ENCODE measurements at regions of chr19 and their contacts with region 1.

Region 1: DNA sequence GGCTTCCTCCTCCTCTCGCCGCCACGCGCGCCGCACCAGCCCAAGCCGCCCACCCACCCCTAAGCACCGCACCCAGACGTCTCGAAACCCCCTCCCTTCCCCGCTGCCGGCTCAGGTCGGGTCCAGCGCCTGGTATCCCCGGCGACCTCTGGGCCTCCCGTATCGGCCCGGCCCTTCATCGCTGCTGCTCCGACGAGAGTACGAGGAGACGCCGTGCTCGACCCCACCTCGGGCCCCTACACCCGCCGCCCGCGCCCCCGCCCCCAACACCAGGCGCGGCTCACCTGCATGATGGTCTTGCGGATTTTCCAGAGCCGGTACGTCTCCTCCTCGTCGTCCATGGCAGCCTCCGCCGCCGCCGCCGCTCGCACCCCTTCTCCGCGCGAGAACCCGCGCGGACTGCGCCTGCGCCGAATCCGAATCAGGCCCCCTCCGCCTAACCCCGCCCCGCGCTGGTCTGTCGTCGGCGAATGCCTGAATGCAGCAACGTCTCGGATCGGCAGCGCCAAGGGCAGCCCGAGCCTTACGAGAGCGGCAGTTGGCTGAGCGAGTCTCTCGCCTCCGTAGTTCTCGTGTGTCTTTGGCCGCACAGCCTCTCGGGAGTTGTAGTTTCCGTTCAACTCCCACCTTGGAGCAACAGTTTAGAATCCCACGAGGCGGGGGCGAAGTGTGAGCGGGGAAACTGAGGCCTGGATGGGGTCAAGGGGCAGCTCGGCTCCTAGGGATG is at the start of gene POLR2E:
- DNase-seq: peak; percentile 98
- H3K4me3 Mint-ChIP-seq: peak within 1 kb of the TSS; percentile 90
- H3K27ac Mint-ChIP-seq: peak within 1 kb of the TSS; percentile 96
- H3K4me1 Mint-ChIP-seq: peaks cover 24% of the 10 kb centered on the region
- H3K27me3 Mint-ChIP-seq: no peaks in the 10 kb centered on the region
- CTCF ChIP-seq: no peak
- total RNA-seq, gene POLR2E: 184 and 201 TPM in 2 replicates

Region 2: DNA sequence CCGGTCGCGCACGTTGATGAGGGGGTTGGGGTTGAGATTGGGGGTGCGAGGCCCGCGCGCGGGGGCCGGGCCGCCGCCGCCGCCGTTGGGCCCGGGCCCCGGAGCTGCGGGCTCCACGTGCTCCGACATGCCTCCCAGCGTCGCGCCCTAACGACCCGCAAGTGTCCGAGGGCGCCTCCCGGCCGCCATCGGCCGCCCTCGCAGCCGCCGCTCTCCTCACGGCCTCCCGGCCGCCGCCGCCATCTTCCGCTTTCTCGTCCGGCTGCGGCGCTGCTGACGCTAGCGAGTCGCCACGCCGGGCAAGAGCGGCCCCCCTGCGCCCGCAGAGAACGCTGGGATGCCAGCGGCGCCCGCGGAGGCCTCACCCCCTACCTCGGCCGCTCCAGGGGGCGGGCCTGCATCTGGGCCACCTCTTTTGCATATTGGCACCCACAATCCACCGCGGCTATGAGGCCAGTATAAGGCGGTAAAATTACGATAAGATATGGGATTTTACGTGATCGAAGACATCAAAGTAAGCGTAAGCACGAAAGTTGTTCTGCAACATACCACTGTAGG is 74.2 kb before region 1 on chr19 and contains the start of gene TMEM259:
- CTCF ChIA-PET with region 1: no interaction called
- POLR2A ChIA-PET with region 1: interaction called, 5 read pairs
- intact Hi-C with region 1: loop called (anchors 2 kb)
- DNase-seq: peak; percentile 99
- H3K4me3 Mint-ChIP-seq: peak within 1 kb of the TSS; percentile 86
- H3K27ac Mint-ChIP-seq: peak within 1 kb of the TSS; percentile 99
- H3K4me1 Mint-ChIP-seq: peaks cover 17% of the 10 kb centered on the region
- H3K27me3 Mint-ChIP-seq: no peaks in the 10 kb centered on the region
- CTCF ChIP-seq: no peak
- total RNA-seq, gene TMEM259: 130 and 146 TPM in 2 replicates

Region 3: GRCh38 chr19:1074544-1075283 is 20.4 kb before region 1 on chr19:
- CTCF ChIA-PET with region 1: interaction called, 4 read pairs
- POLR2A ChIA-PET with region 1: interaction called, 11 read pairs
- intact Hi-C with region 1: loop called (anchors 5 kb)
- DNase-seq: peak; percentile 87
- H3K4me3 Mint-ChIP-seq: no peak overlapping the region
- H3K27ac Mint-ChIP-seq: no peak overlapping the region
- H3K4me1 Mint-ChIP-seq: peaks cover 8% of the 10 kb centered on the region
- H3K27me3 Mint-ChIP-seq: no peaks in the 10 kb centered on the region
- CTCF ChIP-seq: no peak

Region 4: DNA sequence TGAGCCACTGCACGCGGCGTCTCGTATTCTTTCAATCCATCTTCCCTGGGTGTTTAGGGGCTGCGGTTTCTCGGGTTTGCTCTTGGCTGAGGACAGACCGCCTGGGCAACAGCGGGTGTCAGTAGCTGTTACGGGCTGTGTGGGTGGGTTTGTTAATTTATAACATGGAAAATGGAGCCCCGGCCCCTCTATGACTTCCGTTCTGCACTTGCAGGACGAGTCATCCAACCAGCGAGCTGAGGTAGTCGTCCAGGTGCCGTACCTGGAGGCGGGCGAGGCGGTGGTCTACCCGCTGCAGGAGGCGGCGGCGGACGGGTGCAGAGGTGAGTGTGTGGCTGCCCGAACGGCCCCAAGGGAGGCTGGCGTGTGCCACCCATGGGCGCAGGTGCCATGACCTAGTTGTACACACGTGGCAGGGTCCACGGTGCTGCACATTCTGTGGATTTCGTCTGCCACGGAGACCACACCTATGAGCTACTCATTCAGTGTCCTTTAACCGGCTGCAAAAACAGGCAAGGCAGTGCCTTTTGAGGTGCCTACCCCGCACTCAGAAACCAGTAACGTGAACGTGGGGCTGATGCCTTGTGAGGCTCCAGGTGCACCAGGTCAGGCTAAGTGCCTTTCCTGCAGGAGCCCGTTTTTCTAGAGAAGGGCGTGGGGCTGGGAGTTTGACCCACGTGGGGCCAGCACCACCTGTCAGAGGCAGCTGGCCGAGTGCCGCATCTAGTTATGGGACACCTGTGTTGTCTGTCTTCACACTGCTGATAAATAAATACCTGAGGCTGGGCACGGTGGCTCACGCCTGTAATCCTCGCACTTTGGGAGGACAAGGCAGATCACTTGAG is 10.9 kb before region 1 on chr19:
- CTCF ChIA-PET with region 1: interaction called, 3 read pairs
- POLR2A ChIA-PET with region 1: interaction called, 19 read pairs
- intact Hi-C with region 1: no loop called
- DNase-seq: no peak
- H3K4me3 Mint-ChIP-seq: no peak overlapping the region
- H3K27ac Mint-ChIP-seq: no peak overlapping the region
- H3K4me1 Mint-ChIP-seq: peaks cover 6% of the 10 kb centered on the region
- H3K27me3 Mint-ChIP-seq: no peaks in the 10 kb centered on the region
- CTCF ChIP-seq: no peak

Region 5: DNA sequence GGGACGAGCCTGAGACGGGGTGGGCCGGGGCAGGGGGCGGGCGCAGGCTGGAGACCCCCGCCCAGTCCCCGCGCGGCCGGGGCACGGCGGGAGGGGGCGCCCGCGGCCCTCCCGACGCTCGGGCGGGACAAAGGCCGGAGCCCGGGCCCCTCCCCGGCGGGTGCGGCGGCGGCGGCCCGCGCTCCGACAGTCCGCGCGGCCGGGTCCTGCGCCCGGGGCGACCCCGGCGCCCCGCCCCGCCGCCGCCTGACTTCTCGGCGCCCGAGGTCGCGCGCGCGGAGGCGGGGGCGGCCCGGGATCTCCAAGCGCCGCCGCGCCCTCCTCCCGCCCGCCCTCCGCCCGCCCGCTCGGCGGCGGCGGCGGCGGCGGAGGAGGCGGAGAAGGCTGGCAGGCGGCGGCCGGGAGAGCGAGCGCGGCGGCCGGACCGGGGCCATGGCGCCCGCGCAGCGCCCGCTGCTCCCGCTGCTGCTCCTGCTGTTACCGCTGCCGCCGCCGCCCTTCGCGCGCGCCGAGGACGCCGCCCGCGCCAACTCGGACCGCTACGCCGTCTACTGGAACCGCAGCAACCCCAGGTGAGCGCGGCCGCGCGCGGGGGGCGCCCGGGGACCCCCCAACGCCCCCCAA is 190.7 kb after region 1 on chr19 and contains the start of gene EFNA2:
- CTCF ChIA-PET with region 1: no interaction called
- POLR2A ChIA-PET with region 1: no interaction called
- intact Hi-C with region 1: no loop called
- DNase-seq: no peak
- H3K4me3 Mint-ChIP-seq: peak within 1 kb of the TSS; percentile 63
- H3K27ac Mint-ChIP-seq: no peak within 1 kb of the TSS
- H3K4me1 Mint-ChIP-seq: no peaks in the 10 kb centered on the region
- H3K27me3 Mint-ChIP-seq: peaks cover 27% of the 10 kb centered on the region
- CTCF ChIP-seq: no peak
- total RNA-seq, gene EFNA2: not detected in 2 replicates

Region 6: GRCh38 chr19:1336079-1336684 is 241.0 kb after region 1 on chr19:
- CTCF ChIA-PET with region 1: no interaction called
- POLR2A ChIA-PET with region 1: no interaction called
- intact Hi-C with region 1: no loop called
- DNase-seq: no peak
- H3K4me3 Mint-ChIP-seq: no peak overlapping the region
- H3K27ac Mint-ChIP-seq: no peak overlapping the region
- H3K4me1 Mint-ChIP-seq: no peaks in the 10 kb centered on the region
- H3K27me3 Mint-ChIP-seq: no peaks in the 10 kb centered on the region
- CTCF ChIP-seq: no peak